ENCODE measurements at regions of chr13 and their contacts with region 1.

Region 1: GRCh38 chr13:112522578-112522977 is 65.4 kb downstream of the TUBGCP3 start:
- DNase-seq: no peak
- CTCF ChIP-seq: no peak

Region 2: DNA sequence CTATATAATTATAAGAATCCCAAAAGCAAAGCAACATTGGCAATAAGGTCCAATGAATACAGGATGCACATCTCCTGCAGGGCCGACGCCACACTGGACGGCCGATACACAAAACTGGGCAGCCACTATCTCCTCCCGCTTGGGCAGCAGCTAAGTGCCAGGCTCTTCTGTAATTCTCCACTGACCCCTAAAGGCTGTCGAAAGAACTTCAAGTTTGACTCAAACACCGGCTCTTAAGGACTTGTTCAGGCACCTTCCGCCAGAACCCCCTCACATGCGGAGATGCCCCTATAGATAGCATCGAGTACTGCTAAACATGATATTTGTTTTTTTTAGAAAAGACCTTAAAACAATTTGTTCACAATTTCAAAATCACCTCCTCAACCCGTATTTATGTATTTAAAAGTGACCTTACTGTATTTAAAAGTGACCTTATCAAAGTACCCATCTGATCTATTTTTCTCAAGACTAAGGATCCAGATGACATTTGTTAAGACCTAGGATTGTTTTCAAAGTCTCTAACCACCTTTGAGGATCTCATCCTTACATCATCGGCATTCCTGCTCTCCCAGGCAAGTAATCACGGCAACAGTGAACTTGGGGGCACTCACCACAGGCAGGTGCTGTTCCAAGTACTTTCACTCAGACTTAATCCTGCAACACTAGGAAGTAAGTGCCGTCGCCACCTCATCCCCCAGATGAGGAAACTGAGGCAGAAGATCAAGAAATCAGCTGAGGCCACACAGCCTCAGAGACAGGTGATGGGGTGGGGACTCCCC is 12.4 kb before region 1 on chr13:
- CTCF ChIA-PET with region 1: interaction called, 20 read pairs
- POLR2A ChIA-PET with region 1: no interaction called
- DNase-seq: peak; percentile 44
- CTCF ChIP-seq: no peak

Region 3: GRCh38 chr13:112657850-112658444 is 135.4 kb after region 1 on chr13:
- CTCF ChIA-PET with region 1: no interaction called
- POLR2A ChIA-PET with region 1: no interaction called
- DNase-seq: no peak
- CTCF ChIP-seq: no peak